Naive thymus-derived CD4-positive, alpha-beta T cell (primary cell): ENCODE measurements at regions of chr17 and their contacts with region 1.

Region 1: GRCh38 chr17:44344939-44345453 is at the start of gene GRN:
- DNase-seq: peak; percentile 67 to 85 (median 81)
- ATAC-seq: peak; percentile 96
- H3K4me3 ChIP-seq: peak within 1 kb of the TSS; percentile 88
- H3K4me3 Mint-ChIP-seq: peak within 1 kb of the TSS; percentile 88 to 96 (median 93)
- H3K27ac ChIP-seq: peak within 1 kb of the TSS; percentile 71
- H3K27ac Mint-ChIP-seq: peak within 1 kb of the TSS; percentile 42 to 88 (median 79)
- H3K4me1 ChIP-seq: peaks cover 6% of the 10 kb centered on the region in 2 donors
- H3K4me1 Mint-ChIP-seq: peaks cover 8 to 28% (median 19%) of the 10 kb centered on the region in 7 donors
- H3K27me3 ChIP-seq: no peaks in the 10 kb centered on the region
- H3K27me3 Mint-ChIP-seq: peaks cover 0 to 21% (median 7%) of the 10 kb centered on the region in 5 donors
- total RNA-seq, gene GRN: 49.5 to 374 (median 52.2) TPM

Region 2: GRCh38 chr17:44141717-44142285 is 203.2 kb before region 1 on chr17 and contains the start of gene HROB:
- CTCF ChIA-PET with region 1: interaction called, 4 read pairs
- POLR2A ChIA-PET with region 1: no interaction called
- intact Hi-C with region 1: loop called in 1 of 2 experiments (anchors 1 kb)
- DNase-seq: peak; percentile 96 to 100 (median 98)
- ATAC-seq: peak; percentile 98
- H3K4me3 ChIP-seq: peak within 1 kb of the TSS; percentile 84
- H3K4me3 Mint-ChIP-seq: peak within 1 kb of the TSS; percentile 82 to 89 (median 84)
- H3K27ac ChIP-seq: peak within 1 kb of the TSS; percentile 84
- H3K27ac Mint-ChIP-seq: peak within 1 kb of the TSS; percentile 65 to 91 (median 87)
- H3K4me1 ChIP-seq: peaks cover 0 to 9% of the 10 kb centered on the region in 2 donors
- H3K4me1 Mint-ChIP-seq: peaks cover 0 to 32% (median 12%) of the 10 kb centered on the region in 7 donors
- H3K27me3 ChIP-seq: no peaks in the 10 kb centered on the region
- H3K27me3 Mint-ChIP-seq: peaks cover 0 to 5% (median 0%) of the 10 kb centered on the region in 5 donors
- total RNA-seq, gene HROB: 0.76 to 12.3 (median 2.1) TPM

Region 3: DNA sequence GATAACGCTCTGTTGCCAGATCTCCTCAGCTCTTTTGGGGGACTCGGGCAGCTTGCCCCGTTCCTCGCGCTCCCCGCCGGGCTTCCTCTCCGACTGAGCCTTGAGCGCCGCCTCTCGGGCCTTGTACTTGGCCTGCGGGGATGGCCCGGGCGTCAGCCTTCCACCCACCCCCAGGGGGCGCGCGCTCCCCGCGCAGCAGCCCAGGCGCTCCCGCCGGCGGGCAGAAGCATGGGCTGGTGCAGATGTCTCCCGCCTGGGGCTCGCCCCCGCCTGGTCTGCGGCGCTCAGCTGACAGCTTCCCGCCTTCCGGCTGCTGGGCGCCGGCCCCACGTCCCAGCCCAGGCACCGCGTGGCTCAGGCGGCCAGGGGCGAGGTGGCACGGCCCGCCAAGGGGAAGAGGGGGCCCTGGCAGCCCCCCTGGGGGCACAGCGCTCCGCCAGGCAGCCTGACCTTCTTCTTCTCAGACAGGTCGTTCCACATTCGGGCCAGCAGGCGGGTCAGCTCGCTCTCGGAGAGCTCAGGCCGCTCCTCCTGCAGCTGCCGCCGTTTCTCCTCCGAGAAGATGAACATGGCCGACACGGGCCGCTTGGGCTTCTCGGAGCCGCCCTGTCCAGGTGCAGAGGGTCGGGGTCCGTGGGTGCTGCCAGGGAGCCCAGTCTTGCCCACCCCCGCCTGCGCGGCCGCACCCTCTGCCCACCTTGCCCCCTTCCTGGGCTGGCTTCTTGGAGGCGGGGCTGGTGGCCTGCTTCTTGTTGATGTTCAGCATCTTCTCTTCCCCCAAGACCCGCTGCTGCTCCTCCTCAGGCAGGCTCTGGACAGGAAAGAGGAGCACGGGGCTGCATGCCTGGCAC is 134.4 kb before region 1 on chr17:
- CTCF ChIA-PET with region 1: interaction called, 29 read pairs
- POLR2A ChIA-PET with region 1: interaction called, 6 read pairs
- intact Hi-C with region 1: loop called (anchors 1 kb)
- DNase-seq: peak; percentile 82 to 97 (median 93)
- ATAC-seq: peak; percentile 99
- H3K4me3 ChIP-seq: no peak overlapping the region
- H3K4me3 Mint-ChIP-seq: peak overlapping the region; percentile 16 to 77 (median 60)
- H3K27ac ChIP-seq: peak overlapping the region; percentile 68
- H3K27ac Mint-ChIP-seq: peak overlapping the region; percentile 52 to 90 (median 81)
- H3K4me1 ChIP-seq: peaks cover 25 to 47% of the 10 kb centered on the region in 2 donors
- H3K4me1 Mint-ChIP-seq: peaks cover 30 to 67% (median 50%) of the 10 kb centered on the region in 7 donors
- H3K27me3 ChIP-seq: no peaks in the 10 kb centered on the region
- H3K27me3 Mint-ChIP-seq: no peaks in the 10 kb centered on the region

Region 4: DNA sequence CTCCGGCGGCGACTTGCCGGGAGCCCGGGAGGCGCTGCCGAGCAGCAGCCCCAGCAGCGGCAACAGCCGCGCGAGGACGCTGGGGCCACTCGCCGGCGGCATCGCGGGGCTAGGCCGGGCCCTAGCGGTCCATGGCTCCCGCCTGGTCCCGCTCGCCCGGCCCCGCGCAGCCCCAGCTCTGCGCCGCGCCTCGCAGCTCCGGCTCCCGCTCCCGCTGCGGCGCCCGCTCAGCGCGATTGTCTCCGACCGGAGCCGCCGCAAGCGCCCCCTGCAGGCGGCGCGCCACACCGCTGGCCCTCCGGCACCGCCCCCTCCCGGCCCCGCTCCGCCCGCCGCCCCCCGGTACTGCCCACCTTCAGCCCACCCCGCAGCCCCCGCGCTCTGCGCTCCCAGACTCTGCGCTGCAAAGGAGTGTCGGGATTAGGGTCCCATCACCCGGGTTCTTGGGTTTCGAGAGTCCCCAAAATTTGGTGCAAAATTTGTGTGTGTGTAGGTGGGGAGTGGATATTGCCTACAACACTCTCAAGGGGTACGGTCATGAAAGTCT is 18.7 kb after region 1 on chr17 and contains the start of gene FAM171A2:
- CTCF ChIA-PET with region 1: interaction called, 9 read pairs
- POLR2A ChIA-PET with region 1: no interaction called
- intact Hi-C with region 1: loop called in 1 of 2 experiments (anchors 1 kb)
- DNase-seq: peak; percentile 41 to 83 (median 69)
- ATAC-seq: peak; percentile 96
- H3K4me3 ChIP-seq: peak within 1 kb of the TSS; percentile 62
- H3K4me3 Mint-ChIP-seq: peak within 1 kb of the TSS; percentile 75 to 86 (median 80)
- H3K27ac ChIP-seq: no peak within 1 kb of the TSS
- H3K27ac Mint-ChIP-seq: peak within 1 kb of the TSS in 3 of 9 donors; percentile 49 to 78 (median 71)
- H3K4me1 ChIP-seq: no peaks in the 10 kb centered on the region
- H3K4me1 Mint-ChIP-seq: peaks cover 6 to 12% (median 7%) of the 10 kb centered on the region in 7 donors
- H3K27me3 ChIP-seq: no peaks in the 10 kb centered on the region
- H3K27me3 Mint-ChIP-seq: peaks cover 0 to 65% (median 30%) of the 10 kb centered on the region in 5 donors
- total RNA-seq, gene FAM171A2: 0.24 to 0.78 (median 0.39) TPM

Region 5: DNA sequence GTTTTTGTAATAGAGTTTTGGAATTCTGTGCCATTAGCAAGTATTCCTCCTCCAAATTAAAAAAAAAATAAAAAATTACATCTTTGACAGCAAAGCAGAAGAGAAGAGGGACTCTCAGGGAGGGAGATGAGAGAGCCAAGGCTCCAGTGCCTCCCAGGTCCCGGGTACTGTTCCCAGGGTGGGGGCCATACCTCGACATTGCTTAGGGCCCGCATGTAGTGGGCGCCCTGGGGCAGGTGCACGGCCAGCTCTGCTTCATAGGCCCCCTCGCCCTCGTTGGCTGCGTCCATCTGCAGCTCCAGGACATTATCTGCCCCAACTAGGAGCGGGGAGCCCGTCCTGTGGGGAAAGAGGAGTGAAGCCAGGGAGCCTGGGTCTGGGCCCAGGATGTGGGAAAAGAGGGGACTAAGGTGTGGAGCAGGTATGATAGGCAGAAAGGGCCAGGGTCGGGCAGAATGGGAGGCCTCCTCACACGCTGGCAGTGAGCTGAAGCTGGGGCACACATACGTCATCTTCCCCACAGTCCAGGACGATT is 33.2 kb after region 1 on chr17:
- CTCF ChIA-PET with region 1: no interaction called
- POLR2A ChIA-PET with region 1: no interaction called
- intact Hi-C with region 1: no loop called
- DNase-seq: no peak
- ATAC-seq: no peak
- H3K4me3 ChIP-seq: no peak overlapping the region
- H3K4me3 Mint-ChIP-seq: no peak overlapping the region
- H3K27ac ChIP-seq: no peak overlapping the region
- H3K27ac Mint-ChIP-seq: no peak overlapping the region
- H3K4me1 ChIP-seq: no peaks in the 10 kb centered on the region
- H3K4me1 Mint-ChIP-seq: peaks cover 0 to 4% (median 0%) of the 10 kb centered on the region in 7 donors
- H3K27me3 ChIP-seq: no peaks in the 10 kb centered on the region
- H3K27me3 Mint-ChIP-seq: peaks cover 0 to 19% (median 5%) of the 10 kb centered on the region in 5 donors